GM13976 (cell line): ENCODE measurements at regions of chr3 and their contacts with region 1.

Region 1: DNA sequence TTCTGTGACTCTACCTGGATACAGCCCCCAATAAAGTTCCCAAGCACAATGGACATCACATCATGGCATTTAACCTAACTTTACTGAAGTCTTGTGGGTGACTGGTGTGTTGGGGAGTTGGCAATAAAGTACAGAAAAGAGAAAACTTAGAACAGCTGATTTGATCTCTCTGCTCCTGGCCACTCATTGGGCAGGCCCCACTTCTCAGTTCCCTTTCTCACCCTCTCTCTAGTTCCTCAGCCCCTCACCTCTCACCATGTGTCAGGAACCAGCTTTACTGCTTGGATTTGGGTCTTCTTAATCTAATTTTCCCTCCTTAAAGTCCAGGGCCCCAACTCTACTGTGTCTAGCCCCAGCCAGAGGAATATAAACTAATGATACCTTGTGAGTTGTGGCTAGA is 713 bp upstream of the MUC13 start:
- DNase-seq: no peak
- CTCF ChIP-seq: no peak

Region 2: GRCh38 chr3:125129512-125129962 is 194.3 kb after region 1 on chr3:
- in situ Hi-C with region 1: no loop called
- DNase-seq: no peak
- CTCF ChIP-seq: no peak

Region 3: GRCh38 chr3:125351814-125352456 is 416.7 kb after region 1 on chr3:
- in situ Hi-C with region 1: no loop called
- DNase-seq: no peak
- CTCF ChIP-seq: no peak

Region 4: GRCh38 chr3:125381743-125382142 is 446.5 kb after region 1 on chr3:
- in situ Hi-C with region 1: loop called (anchors 5 kb)
- DNase-seq: no peak
- CTCF ChIP-seq: no peak